Mammary epithelial cell (primary cell): ENCODE measurements at regions of chr1 and their contacts with region 1.

Region 1: GRCh38 chr1:161956097-161956496 is 67.6 kb downstream of the OLFML2B start:
- DNase-seq: no peak
- H3K4me3 ChIP-seq: no peak overlapping the region
- H3K27ac ChIP-seq: no peak overlapping the region
- H3K4me1 ChIP-seq: peaks cover 12% of the 10 kb centered on the region
- H3K27me3 ChIP-seq: no peaks in the 10 kb centered on the region
- CTCF ChIP-seq: no peak

Region 2: GRCh38 chr1:161885003-161885402 is 71.1 kb before region 1 on chr1:
- CTCF ChIA-PET with region 1: no interaction called
- dilution Hi-C with region 1: no loop called
- in situ Hi-C with region 1: no loop called
- intact Hi-C with region 1: no loop called
- DNase-seq: peak; percentile 79
- H3K4me3 ChIP-seq: no peak overlapping the region
- H3K27ac ChIP-seq: no peak overlapping the region
- H3K4me1 ChIP-seq: peaks cover 13% of the 10 kb centered on the region
- H3K27me3 ChIP-seq: no peaks in the 10 kb centered on the region
- CTCF ChIP-seq: no peak

Region 3: DNA sequence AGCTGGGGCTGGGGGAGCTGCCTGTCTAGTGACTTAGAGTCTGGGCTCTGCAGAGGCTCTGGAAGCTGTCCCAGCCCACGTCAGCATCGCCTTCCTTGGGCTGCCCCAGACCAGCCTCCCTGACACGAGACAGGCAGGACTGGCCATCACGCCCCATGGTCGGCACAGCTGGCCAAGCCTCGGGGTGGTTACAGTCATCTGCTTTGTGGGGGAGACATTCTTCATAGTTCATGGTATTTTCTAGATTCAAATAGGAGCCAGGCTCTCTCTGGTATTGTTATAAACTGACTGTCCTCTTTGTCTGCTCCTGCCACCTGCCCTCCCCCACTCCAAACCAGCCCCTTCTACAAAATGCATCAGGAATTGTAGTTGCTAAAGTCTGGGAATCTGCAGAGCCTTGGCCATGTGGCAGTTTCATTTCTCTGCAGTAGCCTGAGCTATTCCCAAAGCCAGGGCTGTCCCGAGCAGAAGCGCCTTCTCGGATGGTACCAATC is 38.1 kb after region 1 on chr1:
- CTCF ChIA-PET with region 1: no interaction called
- dilution Hi-C with region 1: loop called (anchors 5 kb)
- in situ Hi-C with region 1: no loop called
- intact Hi-C with region 1: no loop called
- DNase-seq: no peak
- H3K4me3 ChIP-seq: no peak overlapping the region
- H3K27ac ChIP-seq: no peak overlapping the region
- H3K4me1 ChIP-seq: no peaks in the 10 kb centered on the region
- H3K27me3 ChIP-seq: peaks cover 10% of the 10 kb centered on the region
- CTCF ChIP-seq: no peak